Ascending aorta (tissue), 2 donors: ENCODE measurements at regions of chr17 and their contacts with region 1.

Region 1: DNA sequence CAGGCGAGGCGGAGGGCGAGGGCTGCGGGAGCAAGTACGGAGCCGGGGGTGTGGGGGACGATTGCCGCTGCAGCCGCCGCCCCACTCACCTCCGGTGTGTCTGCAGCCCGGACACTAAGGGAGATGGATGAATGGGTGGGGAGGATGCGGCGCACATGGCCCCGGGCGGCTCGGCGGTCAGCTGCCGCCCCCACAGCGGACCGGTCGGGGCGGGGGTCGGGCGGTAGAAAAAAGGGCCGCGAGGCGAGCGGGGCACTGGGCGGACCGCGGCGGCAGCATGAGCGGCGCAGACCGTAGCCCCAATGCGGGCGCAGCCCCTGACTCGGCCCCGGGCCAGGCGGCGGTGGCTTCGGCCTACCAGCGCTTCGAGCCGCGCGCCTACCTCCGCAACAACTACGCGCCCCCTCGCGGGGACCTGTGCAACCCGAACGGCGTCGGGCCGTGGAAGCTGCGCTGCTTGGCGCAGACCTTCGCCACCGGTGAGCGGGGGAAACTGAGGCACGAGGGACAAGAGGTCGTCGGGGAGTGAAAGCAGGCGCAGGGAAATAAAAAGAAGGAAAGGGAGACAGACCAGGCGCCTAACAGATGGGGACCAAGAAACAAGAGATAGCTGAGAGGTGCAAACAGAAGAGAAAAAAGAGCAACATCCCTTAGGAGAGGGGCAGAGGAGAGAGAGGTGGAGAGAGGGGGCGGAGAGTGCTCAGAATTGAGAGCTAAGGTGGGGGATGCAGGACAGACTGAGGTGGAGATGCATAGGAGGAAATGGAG is at the start of gene PNMT:
- DNase-seq: no peak
- H3K4me3 ChIP-seq: peak within 1 kb of the TSS; percentile 37 to 63
- H3K27ac ChIP-seq: peak within 1 kb of the TSS; percentile 68 to 74
- H3K4me1 ChIP-seq: peaks cover 25 to 58% of the 10 kb centered on the region in 2 donors
- H3K27me3 ChIP-seq: no peaks in the 10 kb centered on the region
- CTCF ChIP-seq: peak; percentile 52 to 70 (median 54)
- total RNA-seq, gene PNMT: 5.1 TPM

Region 2: GRCh38 chr17:39621523-39622379 is 46.6 kb before region 1 on chr17:
- intact Hi-C with region 1: loop called (anchors 1 kb)
- DNase-seq: peak; percentile 53 to 93
- H3K4me3 ChIP-seq: no peak overlapping the region
- H3K27ac ChIP-seq: no peak overlapping the region
- H3K4me1 ChIP-seq: peaks cover 1 to 5% of the 10 kb centered on the region in 2 donors
- H3K27me3 ChIP-seq: peaks cover 4% of the 10 kb centered on the region
- CTCF ChIP-seq: peak; percentile 98 to 100 (median 100)

Region 3: GRCh38 chr17:39636927-39637736 is 31.3 kb before region 1 on chr17 and contains the start of gene STARD3:
- intact Hi-C with region 1: loop called (anchors 2 kb)
- DNase-seq: peak; percentile 63 to 93
- H3K4me3 ChIP-seq: peak within 1 kb of the TSS; percentile 68 to 84
- H3K27ac ChIP-seq: peak within 1 kb of the TSS; percentile 83 to 89
- H3K4me1 ChIP-seq: peaks cover 11 to 27% of the 10 kb centered on the region in 2 donors
- H3K27me3 ChIP-seq: no peaks in the 10 kb centered on the region
- CTCF ChIP-seq: peak; percentile 13 to 34 (median 14)
- total RNA-seq, gene STARD3: 87.6 TPM

Region 4: DNA sequence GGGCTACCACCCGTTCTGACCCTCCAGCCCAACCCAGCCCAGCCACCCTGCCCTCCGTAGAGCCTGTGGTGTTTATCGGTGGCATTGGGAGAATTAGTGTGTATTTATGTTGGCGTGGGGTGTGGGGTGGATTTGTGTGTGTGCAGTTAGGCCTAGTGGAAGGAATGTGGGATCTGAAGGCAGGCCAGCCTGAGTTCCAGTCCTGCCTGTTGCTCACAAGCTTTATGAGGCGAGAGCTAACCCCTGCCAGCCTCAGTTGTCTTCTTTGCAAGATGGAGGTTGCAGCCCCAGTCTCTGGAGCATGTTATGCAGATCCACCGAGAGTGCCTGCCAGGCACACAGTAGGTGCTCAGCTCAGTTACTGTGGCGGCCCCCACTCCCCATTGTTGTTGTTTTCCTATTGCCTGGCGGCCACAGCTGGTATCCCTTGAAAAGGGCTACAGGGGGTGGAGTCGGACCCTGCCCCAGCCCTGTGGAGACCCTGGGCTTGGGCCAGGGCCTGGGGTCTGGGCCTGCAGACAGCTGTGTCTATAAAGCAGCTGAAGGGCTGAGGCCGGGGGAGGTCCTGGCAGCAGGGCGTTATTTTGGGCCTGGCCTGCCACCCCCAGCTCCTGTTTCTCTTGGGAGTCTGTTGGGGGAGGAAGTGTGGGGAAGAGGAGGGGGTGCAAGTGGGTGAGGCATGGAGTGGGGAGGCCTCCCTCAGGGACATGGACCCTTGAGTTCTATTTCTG is 36.6 kb after region 1 on chr17:
- intact Hi-C with region 1: loop called (anchors 2 kb)
- DNase-seq: peak in 1 of 2 donors; percentile 83
- H3K4me3 ChIP-seq: peak overlapping the region in 1 of 2 donors; percentile 38
- H3K27ac ChIP-seq: peak overlapping the region; percentile 83 to 88
- H3K4me1 ChIP-seq: peaks cover 7 to 38% of the 10 kb centered on the region in 2 donors
- H3K27me3 ChIP-seq: no peaks in the 10 kb centered on the region
- CTCF ChIP-seq: peak; percentile 51 to 78 (median 65)